Activated T-helper 2 cell treated with anti-CD3 and anti-CD28 coated beads, Interferon-gamma antibody, Interleukin-2, Interleukin-4, amounts not matched to agents 10 μg/mL and 5 μg/mL and 100 μg/mL, durations not matched to agents 14 hours and 24 hours and 36 hours (primary cell): ENCODE measurements at regions of chr12 and their contacts with region 1.

Region 1: DNA sequence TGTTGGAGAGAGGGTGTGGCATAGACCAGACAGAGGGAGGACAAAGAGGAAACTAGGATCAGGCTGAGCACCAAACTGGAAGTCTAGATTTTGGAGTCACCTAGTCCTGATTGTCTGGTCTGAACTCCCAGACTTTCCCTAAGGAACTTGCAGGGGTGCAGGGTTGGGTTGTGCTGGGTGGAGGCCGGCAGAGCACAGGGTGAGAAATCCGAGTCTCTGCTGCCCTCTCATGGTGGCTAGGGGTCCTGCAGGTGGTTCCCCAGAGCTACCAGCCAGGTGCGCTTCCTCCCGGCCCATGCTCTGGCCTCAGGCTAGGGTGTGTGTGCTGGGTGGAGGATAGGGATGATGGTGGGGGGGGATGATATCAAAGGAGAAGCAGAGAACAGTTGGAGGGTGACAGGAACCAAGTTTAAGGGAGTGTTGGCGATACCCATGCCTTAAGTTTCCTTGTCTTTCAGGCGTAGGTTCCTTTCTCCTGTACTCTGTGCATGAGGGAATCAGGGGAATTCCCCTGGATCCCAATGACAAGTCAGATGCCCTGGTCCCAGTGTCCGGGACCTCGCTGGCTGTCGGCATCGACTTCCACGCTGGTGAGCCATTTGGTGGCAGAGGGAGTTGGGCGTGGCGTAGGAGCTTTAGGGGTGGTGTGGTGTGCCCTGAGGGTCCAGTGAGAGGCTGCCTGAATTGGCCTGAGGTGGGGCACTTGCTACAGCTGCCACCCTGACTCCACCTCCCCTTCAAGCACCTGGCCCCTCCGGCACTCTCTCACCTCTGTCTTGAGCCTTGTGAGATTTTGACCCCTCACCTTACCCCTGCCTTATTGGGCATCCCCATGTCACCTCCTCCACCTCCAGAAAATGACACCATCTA is 33.4 kb upstream of the NXPH4 start:
- DNase-seq: peak; percentile 69
- H3K4me3 Mint-ChIP-seq: no peak overlapping the region
- H3K27ac Mint-ChIP-seq: no peak overlapping the region
- H3K4me1 Mint-ChIP-seq: peaks cover 5% of the 10 kb centered on the region
- H3K27me3 Mint-ChIP-seq: no peaks in the 10 kb centered on the region

Region 2: DNA sequence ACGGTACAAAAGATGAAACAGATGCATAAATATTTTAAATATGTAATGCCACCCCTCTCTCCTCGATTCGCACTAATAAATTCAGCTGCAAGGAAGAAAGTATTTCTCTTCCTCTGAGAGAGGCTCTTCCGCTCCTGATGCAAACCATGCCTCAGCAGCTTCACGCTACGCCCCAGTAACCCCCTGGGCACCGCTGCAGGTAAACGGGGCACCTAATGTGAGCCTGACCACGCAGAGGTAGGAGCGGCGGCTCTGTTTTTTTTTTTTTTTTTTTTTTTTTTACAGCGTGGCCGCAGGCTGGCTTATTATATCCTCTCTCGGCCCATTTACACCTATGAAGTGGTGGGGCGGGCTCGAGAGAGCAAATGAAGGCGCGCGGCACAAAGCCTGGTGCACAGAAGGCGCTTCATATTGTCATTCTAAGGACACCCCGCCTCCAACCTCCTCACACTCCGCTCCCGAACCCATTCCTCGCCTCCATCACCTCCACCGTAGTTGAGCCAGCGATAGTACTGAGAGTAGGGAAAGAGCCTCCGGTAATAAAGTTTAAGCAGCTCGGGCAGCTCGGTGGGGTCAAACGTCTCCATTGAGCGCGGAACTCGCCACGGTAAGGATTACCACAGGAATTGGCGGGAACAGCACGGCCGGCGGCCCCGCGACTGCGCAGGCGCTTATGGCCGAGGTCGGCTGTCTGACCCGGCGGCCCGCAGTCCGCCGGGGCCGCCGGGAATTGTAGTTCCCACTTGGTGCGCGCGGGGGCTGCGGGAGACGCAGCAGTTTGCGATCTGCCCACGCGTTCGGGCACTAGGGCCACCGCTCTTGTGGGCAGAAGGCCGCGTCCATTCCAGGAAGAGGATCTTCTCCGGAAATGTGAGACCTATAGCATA is 431.2 kb before region 1 on chr12 and contains the start of gene PRIM1:
- intact Hi-C with region 1: loop called (anchors 10 kb)
- DNase-seq: peak; percentile 88
- H3K4me3 Mint-ChIP-seq: peak within 1 kb of the TSS; percentile 98
- H3K27ac Mint-ChIP-seq: peak within 1 kb of the TSS; percentile 99
- H3K4me1 Mint-ChIP-seq: peaks cover 39% of the 10 kb centered on the region
- H3K27me3 Mint-ChIP-seq: no peaks in the 10 kb centered on the region
- total RNA-seq, gene PRIM1: 59.4 and 63.9 TPM in 2 replicates

Region 3: DNA sequence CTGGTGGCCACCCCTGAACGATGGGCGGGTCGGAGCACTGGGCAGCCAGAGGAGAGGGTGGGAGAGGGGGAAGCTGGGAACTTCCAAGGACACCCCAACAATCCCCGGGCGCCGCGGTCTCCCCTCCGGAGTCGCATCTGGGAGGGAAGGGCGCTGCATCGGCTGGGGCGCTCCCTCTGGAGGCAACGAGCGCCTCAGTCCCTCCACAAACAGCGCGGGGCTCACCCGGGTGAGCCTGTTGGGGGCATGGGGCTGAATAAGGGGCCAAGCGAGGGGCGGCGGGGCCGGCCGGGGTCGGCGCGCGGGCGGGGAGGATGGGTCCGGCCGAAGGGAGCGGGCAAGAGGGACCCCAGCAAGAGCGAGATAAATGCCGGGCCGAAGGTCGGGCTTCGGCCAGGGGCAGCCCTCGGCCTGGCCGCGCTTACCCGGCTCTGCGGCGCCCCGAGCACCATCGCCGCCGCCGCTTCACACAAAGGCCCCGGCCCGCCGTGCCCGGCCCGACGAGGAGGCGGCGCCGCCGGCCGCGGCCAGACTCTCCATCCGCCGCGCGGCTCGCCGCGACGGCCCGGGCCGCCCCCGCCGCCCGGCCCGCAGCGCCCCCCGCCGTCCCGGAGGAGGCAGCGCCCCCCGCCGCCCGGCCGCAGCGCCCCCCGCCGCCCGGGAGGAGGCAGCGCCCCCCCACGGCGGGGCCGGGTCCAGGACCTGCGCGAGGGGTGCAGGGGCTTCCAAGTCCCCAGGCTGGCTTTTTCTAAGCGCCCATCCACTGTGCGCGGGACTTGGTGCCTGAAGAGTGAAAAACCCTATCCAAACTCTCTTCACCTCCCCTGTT is 177.0 kb before region 1 on chr12 and contains the start of gene ZBTB39:
- intact Hi-C with region 1: loop called (anchors 5 kb)
- DNase-seq: peak; percentile 60
- H3K4me3 Mint-ChIP-seq: peak within 1 kb of the TSS; percentile 95
- H3K27ac Mint-ChIP-seq: peak within 1 kb of the TSS; percentile 89
- H3K4me1 Mint-ChIP-seq: peaks cover 39% of the 10 kb centered on the region
- H3K27me3 Mint-ChIP-seq: no peaks in the 10 kb centered on the region
- total RNA-seq, gene ZBTB39: 10.5 and 10.6 TPM in 2 replicates

Region 4: DNA sequence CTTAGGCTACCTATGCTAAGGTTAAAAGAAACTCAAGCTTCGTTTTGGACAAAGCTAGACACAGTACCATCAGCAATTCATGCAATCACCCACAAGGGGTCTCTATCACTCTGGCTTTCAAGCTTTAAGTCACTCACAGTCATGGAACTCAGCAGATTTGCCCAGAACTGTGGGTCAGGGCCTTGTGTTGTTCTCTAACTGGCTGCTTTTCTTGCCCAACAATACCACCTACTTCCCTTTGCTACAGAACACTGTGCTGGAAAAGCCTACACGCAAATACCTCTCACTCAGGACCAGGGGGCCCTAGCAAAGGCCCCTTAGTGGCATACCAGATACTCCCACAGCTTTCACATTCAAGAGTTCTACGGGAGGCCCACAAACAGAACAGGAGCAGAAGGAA is 113.6 kb before region 1 on chr12:
- intact Hi-C with region 1: loop called (anchors 2 kb)
- DNase-seq: peak; percentile 46
- H3K4me3 Mint-ChIP-seq: peak overlapping the region; percentile 30
- H3K27ac Mint-ChIP-seq: peak overlapping the region; percentile 88
- H3K4me1 Mint-ChIP-seq: peaks cover 56% of the 10 kb centered on the region
- H3K27me3 Mint-ChIP-seq: no peaks in the 10 kb centered on the region

Region 5: GRCh38 chr12:57124259-57124877 is 58.8 kb before region 1 on chr12:
- intact Hi-C with region 1: loop called (anchors 2 kb)
- DNase-seq: peak; percentile 68
- H3K4me3 Mint-ChIP-seq: no peak overlapping the region
- H3K27ac Mint-ChIP-seq: no peak overlapping the region
- H3K4me1 Mint-ChIP-seq: peaks cover 7% of the 10 kb centered on the region
- H3K27me3 Mint-ChIP-seq: peaks cover 24% of the 10 kb centered on the region

Region 6: GRCh38 chr12:57205933-57206330 is 22.8 kb after region 1 on chr12:
- intact Hi-C with region 1: no loop called
- DNase-seq: no peak
- H3K4me3 Mint-ChIP-seq: no peak overlapping the region
- H3K27ac Mint-ChIP-seq: no peak overlapping the region
- H3K4me1 Mint-ChIP-seq: no peaks in the 10 kb centered on the region
- H3K27me3 Mint-ChIP-seq: no peaks in the 10 kb centered on the region